ENCODE measurements at regions of chr2 and their contacts with region 1.

Region 1: GRCh38 chr2:100610381-100610831 is 47.6 kb downstream of the PDCL3 start:
- DNase-seq: peak; percentile 38
- ATAC-seq: peak; percentile 84
- H3K4me3 ChIP-seq: no peak overlapping the region
- H3K27ac ChIP-seq: no peak overlapping the region
- H3K4me1 ChIP-seq: peaks cover 7% of the 10 kb centered on the region
- H3K27me3 ChIP-seq: no peaks in the 10 kb centered on the region
- CTCF ChIP-seq: peak; percentile 87

Region 2: DNA sequence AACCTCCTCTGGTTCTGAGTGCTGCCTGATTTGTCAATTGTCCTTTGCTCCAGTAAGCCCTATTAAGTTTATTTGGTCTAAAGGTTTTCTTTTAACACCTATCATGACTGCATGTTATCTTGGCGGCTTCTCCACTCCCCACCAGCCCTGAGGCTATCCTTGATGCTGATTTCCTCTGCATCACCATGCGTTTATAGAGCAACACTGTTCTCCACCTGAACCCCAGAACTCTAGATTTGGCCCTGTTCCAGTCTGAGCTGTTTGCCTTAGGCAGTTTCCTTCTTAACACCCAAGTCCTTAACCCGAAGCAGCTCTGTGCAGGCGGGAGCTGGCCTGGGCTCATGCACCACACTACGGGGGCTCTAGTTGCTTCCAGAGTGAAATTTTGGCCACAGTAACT is 111.3 kb after region 1 on chr2:
- CTCF ChIA-PET with region 1: no interaction called
- POLR2A ChIA-PET with region 1: no interaction called
- in situ Hi-C with region 1: no loop called
- intact Hi-C with region 1: loop called (anchors 10 kb)
- DNase-seq: no peak
- ATAC-seq: no peak
- H3K4me3 ChIP-seq: no peak overlapping the region
- H3K27ac ChIP-seq: no peak overlapping the region
- H3K4me1 ChIP-seq: no peaks in the 10 kb centered on the region
- H3K27me3 ChIP-seq: no peaks in the 10 kb centered on the region
- CTCF ChIP-seq: no peak

Region 3: GRCh38 chr2:100984892-100985379 is 374.5 kb after region 1 on chr2:
- CTCF ChIA-PET with region 1: interaction called, 4 read pairs
- POLR2A ChIA-PET with region 1: no interaction called
- in situ Hi-C with region 1: no loop called
- intact Hi-C with region 1: loop called (anchors 2 kb)
- DNase-seq: no peak
- ATAC-seq: peak; percentile 82
- H3K4me3 ChIP-seq: no peak overlapping the region
- H3K27ac ChIP-seq: no peak overlapping the region
- H3K4me1 ChIP-seq: peaks cover 11% of the 10 kb centered on the region
- H3K27me3 ChIP-seq: no peaks in the 10 kb centered on the region
- CTCF ChIP-seq: peak; percentile 93